ENCODE measurements at regions of chr4 and their contacts with region 1.

Region 1: DNA sequence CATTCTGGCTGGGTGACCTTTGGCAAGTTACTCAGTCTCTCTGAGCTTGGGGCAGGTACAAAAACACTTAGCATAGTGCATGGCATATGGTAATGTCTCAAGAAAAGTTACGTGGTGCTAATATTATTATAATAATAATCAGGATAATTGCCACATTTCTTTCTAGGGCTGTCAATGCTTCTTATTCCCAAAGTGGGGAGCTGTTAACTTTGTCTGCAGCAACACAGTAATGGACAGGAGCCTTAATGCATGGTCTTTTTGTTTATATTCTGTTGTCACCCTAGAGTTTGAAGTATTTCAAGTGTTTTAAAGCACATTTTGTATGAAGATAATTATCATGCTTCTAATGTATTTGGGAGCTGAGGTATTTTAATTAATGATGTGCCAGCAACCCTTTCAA is 121.8 kb downstream of the FHIP1A start:
- DNase-seq: no peak
- H3K4me3 ChIP-seq: no peak overlapping the region
- H3K27ac ChIP-seq: no peak overlapping the region
- H3K4me1 ChIP-seq: peaks cover 14% of the 10 kb centered on the region
- H3K27me3 ChIP-seq: no peaks in the 10 kb centered on the region
- CTCF ChIP-seq: peak; percentile 36 to 61

Region 2: GRCh38 chr4:151573945-151574344 is 43.2 kb after region 1 on chr4:
- CTCF ChIA-PET with region 1: no interaction called
- dilution Hi-C with region 1: no loop called
- in situ Hi-C with region 1: no loop called
- intact Hi-C with region 1: no loop called
- DNase-seq: peak; percentile 82
- H3K4me3 ChIP-seq: no peak overlapping the region
- H3K27ac ChIP-seq: no peak overlapping the region
- H3K4me1 ChIP-seq: peaks cover 17% of the 10 kb centered on the region
- H3K27me3 ChIP-seq: no peaks in the 10 kb centered on the region
- CTCF ChIP-seq: peak in 1 of 2 donors; percentile 34

Region 3: GRCh38 chr4:151604238-151604637 is 73.5 kb after region 1 on chr4:
- CTCF ChIA-PET with region 1: interaction called, 4 read pairs
- dilution Hi-C with region 1: no loop called
- in situ Hi-C with region 1: no loop called
- intact Hi-C with region 1: loop called (anchors 1 kb)
- DNase-seq: no peak
- H3K4me3 ChIP-seq: no peak overlapping the region
- H3K27ac ChIP-seq: no peak overlapping the region
- H3K4me1 ChIP-seq: peaks cover 9% of the 10 kb centered on the region
- H3K27me3 ChIP-seq: no peaks in the 10 kb centered on the region
- CTCF ChIP-seq: peak; percentile 43 to 48

Measured in mammary epithelial cell (primary cell).